Natural killer cell (primary cell): ENCODE measurements at regions of chr16 and their contacts with region 1.

Region 1: DNA sequence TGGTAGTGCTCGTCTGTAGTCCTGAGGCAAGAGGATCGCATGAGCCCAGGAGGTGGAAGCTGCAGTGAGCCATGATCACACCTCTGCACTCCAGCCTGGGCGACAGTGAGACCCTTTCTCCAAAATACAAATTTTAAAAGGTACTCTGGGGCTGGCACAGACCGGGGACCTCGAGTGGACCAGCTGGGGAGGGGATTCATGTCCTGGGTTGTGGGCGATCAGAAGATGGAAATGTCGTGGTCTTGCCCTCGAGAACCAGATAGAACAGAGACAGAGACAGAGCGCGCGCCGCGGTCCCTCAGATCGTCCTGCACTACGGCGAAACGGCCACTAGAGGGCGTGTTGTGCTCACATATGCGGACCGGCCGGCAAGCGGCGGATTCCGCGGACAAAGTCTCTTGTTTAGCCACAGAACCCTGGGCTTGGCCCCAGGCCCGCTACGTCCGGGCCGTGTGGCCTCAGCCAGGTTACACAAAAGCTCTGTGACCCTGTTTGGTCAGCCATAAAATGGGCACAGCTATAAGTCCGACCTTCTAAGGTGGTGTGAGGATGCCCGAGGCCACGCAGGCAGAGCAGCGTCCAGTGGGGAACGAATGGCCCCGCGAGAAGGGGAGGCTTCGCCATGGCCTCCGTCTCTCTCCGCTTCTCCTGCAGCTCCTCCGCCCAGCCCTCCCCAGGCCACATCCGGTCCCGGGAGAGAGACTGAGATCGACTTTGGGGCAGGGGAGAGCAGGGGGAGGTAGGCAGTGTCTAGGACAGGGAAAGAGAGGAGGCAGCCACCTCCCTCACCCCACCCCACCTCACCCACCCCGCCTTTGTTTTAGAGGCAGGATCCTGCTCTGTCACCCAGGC is 14.6 kb upstream of the SBK1 start:
- DNase-seq: peak; percentile 84 to 94
- ATAC-seq: peak; percentile 92 to 95 (median 94)
- H3K4me3 ChIP-seq: peak overlapping the region; percentile 28
- H3K4me3 Mint-ChIP-seq: peak overlapping the region; percentile 86
- H3K27ac ChIP-seq: no peak overlapping the region
- H3K27ac Mint-ChIP-seq: peak overlapping the region; percentile 81 to 84
- H3K4me1 ChIP-seq: peaks cover 31% of the 10 kb centered on the region
- H3K4me1 Mint-ChIP-seq: peaks cover 16 to 41% of the 10 kb centered on the region in 2 donors
- H3K27me3 ChIP-seq: no peaks in the 10 kb centered on the region
- H3K27me3 Mint-ChIP-seq: peaks cover 5 to 28% of the 10 kb centered on the region in 2 donors
- CTCF ChIP-seq: peak; percentile 96

Region 2: GRCh38 chr16:28317040-28317880 is 39.5 kb after region 1 on chr16:
- intact Hi-C with region 1: loop called (anchors 1 kb)
- DNase-seq: peak; percentile 73 to 86
- ATAC-seq: peak; percentile 75 to 94 (median 84)
- H3K4me3 ChIP-seq: no peak overlapping the region
- H3K4me3 Mint-ChIP-seq: peak overlapping the region; percentile 35
- H3K27ac ChIP-seq: peak overlapping the region; percentile 10
- H3K27ac Mint-ChIP-seq: peak overlapping the region; percentile 39 to 91
- H3K4me1 ChIP-seq: peaks cover 58% of the 10 kb centered on the region
- H3K4me1 Mint-ChIP-seq: peaks cover 20 to 42% of the 10 kb centered on the region in 2 donors
- H3K27me3 ChIP-seq: no peaks in the 10 kb centered on the region
- H3K27me3 Mint-ChIP-seq: no peaks in the 10 kb centered on the region
- CTCF ChIP-seq: peak; percentile 92